Sciatic nerve (tissue), 2 donors: ENCODE measurements at regions of chr12 and their contacts with region 1.

Region 1: GRCh38 chr12:57487597-57488401 is at the start of gene MARS1:
- DNase-seq: peak; percentile 94
- ATAC-seq: peak; percentile 99
- total RNA-seq, gene MARS1: 121 TPM

Region 2: DNA sequence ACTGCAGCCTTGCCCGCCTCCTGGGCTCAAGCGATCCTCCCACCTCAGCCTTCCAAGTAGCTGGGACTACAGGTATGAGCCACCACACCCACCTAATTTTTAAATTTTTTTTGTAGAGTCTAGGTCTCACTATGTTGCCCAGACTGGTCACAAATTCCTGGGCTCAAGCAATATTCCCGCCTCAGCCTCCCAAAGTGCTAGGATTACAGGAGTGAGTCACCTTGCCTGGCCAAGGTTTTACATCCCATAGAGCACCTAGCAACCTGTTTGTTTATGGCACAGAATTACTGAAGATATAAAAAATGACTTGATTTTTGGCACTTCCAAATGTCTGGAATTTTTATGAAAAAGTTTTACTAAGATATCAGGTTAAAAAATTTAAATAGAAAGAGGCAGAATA is 454.4 kb before region 1 on chr12:
- intact Hi-C with region 1: no loop called
- DNase-seq: no peak
- ATAC-seq: no peak

Region 3: GRCh38 chr12:57552835-57553313 is 65.1 kb after region 1 on chr12:
- intact Hi-C with region 1: loop called (anchors 2 kb)
- DNase-seq: no peak
- ATAC-seq: no peak